WTC11 (cell line): ENCODE measurements at regions of chr17 and their contacts with region 1.

Region 1: GRCh38 chr17:73690676-73691075 is 46.4 kb upstream of the SDK2 start:
- DNase-seq: peak; percentile 54
- ATAC-seq: peak; percentile 78
- H3K4me3 Mint-ChIP-seq: no peak overlapping the region
- H3K27ac Mint-ChIP-seq: no peak overlapping the region
- H3K4me1 Mint-ChIP-seq: peaks cover 55% of the 10 kb centered on the region
- H3K27me3 Mint-ChIP-seq: no peaks in the 10 kb centered on the region; the same call in none of the 2 replicates
- CTCF ChIP-seq: no peak

Region 2: GRCh38 chr17:73546770-73547536 is 143.7 kb before region 1 on chr17:
- CTCF ChIA-PET with region 1: no interaction called
- POLR2A ChIA-PET with region 1: no interaction called
- DNase-seq: peak; percentile 71
- ATAC-seq: peak; percentile 85
- H3K4me3 Mint-ChIP-seq: no peak overlapping the region
- H3K27ac Mint-ChIP-seq: peak overlapping the region; percentile 57; the same call in 1 of the 2 replicates
- H3K4me1 Mint-ChIP-seq: peaks cover 66% of the 10 kb centered on the region
- H3K27me3 Mint-ChIP-seq: no peaks in the 10 kb centered on the region; the same call in 1 of the 2 replicates
- CTCF ChIP-seq: no peak

Region 3: DNA sequence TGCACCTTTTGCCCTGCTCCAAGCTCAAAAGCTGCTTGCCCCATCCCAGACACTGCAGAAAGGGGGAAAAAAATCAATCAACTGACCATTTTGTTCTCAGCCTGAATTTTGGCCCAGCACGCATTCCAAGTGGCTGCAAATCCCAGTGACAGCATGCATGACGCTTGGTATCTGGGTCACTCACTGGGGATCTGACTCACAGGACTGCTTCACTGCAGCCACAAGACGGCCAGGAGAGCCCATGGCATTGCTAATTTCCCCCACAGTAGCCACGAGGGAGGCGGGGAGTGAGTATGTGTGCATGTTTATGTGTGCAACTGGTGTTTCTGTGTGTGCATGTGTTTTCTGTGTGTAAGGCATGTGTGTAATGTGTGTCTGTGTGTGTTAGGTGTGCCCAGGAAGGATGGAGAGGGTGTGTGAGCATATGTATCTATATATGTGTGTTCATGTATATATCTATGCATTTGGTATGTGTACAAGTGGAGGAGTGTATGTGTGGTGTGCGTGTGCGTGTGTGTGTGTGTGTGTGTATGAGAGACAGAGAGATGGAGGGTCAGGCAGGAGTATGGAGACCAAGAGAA is 80.3 kb before region 1 on chr17:
- CTCF ChIA-PET with region 1: no interaction called
- POLR2A ChIA-PET with region 1: no interaction called
- DNase-seq: no peak
- ATAC-seq: no peak
- H3K4me3 Mint-ChIP-seq: no peak overlapping the region
- H3K27ac Mint-ChIP-seq: no peak overlapping the region
- H3K4me1 Mint-ChIP-seq: peaks cover 27% of the 10 kb centered on the region
- H3K27me3 Mint-ChIP-seq: no peaks in the 10 kb centered on the region
- CTCF ChIP-seq: no peak

Region 4: DNA sequence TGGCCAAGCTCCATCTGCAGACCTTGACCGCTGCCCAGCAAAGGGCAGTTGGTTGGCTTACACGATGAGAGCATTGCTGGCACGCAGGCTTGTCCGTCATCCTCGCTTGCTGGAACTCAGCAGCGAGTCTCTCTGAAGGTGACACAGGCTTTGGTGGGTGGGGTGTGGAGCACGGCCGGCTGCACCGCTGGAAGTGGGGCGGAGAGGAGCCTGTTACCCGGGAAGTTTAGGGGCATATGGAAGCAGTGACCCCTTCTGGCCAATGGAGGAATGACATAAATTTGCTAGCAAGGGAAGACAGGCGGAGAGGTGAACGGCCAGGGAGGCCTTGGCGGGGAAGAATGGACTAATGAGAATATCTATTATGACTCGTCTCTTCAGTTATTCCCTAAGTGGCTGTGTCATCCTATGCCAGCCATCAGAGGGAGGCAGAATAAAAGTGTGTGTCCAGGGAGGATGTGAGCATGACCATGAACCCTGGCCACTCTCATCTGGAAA is 19.5 kb after region 1 on chr17:
- CTCF ChIA-PET with region 1: interaction called, 10 read pairs
- POLR2A ChIA-PET with region 1: no interaction called
- DNase-seq: peak; percentile 87
- ATAC-seq: peak; percentile 82
- H3K4me3 Mint-ChIP-seq: no peak overlapping the region
- H3K27ac Mint-ChIP-seq: 0 out of 2 replicates have a peak overlapping the region, but pooled peaks have one; percentile 29
- H3K4me1 Mint-ChIP-seq: peaks cover 13% of the 10 kb centered on the region
- H3K27me3 Mint-ChIP-seq: peaks cover 12% of the 10 kb centered on the region; the same call in 1 of the 2 replicates
- CTCF ChIP-seq: peak; percentile 90